Activated CD8-positive, alpha-beta memory T cell treated with anti-CD3 and anti-CD28 coated beads, Interleukin-2, amount 10 ng/mL, durations not matched to agents 7 days and 5 days (primary cell): ENCODE measurements at regions of chr1 and their contacts with region 1.

Region 1: GRCh38 chr1:16236511-16237342 is at the start of gene CPLANE2:
- DNase-seq: peak; percentile 97
- ATAC-seq: peak; percentile 94
- H3K4me3 Mint-ChIP-seq: peak within 1 kb of the TSS; percentile 79
- H3K27ac Mint-ChIP-seq: peak within 1 kb of the TSS; percentile 86
- H3K4me1 Mint-ChIP-seq: peaks cover 34% of the 10 kb centered on the region
- H3K27me3 Mint-ChIP-seq: no peaks in the 10 kb centered on the region
- total RNA-seq, gene CPLANE2: 5.9 to 6.4 TPM

Region 2: GRCh38 chr1:16217061-16217785 is 19.5 kb before region 1 on chr1:
- CTCF ChIA-PET with region 1: interaction called, 14 read pairs
- DNase-seq: peak; percentile 98
- ATAC-seq: peak; percentile 97
- H3K4me3 Mint-ChIP-seq: peak overlapping the region; percentile 85
- H3K27ac Mint-ChIP-seq: peak overlapping the region; percentile 87
- H3K4me1 Mint-ChIP-seq: peaks cover 24% of the 10 kb centered on the region
- H3K27me3 Mint-ChIP-seq: peaks cover 11% of the 10 kb centered on the region